PC-9 (cell line): ENCODE measurements at regions of chr2 and their contacts with region 1.

Region 1: GRCh38 chr2:39436592-39437510 is at the start of gene MAP4K3:
- DNase-seq: peak; percentile 87 to 93
- H3K4me3 ChIP-seq: peak within 1 kb of the TSS; percentile 86
- H3K27ac ChIP-seq: peak within 1 kb of the TSS; percentile 69
- H3K4me1 ChIP-seq: peaks cover 53% of the 10 kb centered on the region
- H3K27me3 ChIP-seq: no peaks in the 10 kb centered on the region
- CTCF ChIP-seq: no peak
- total RNA-seq, gene MAP4K3: 38.4 and 46.7 TPM in 2 replicates

Region 2: GRCh38 chr2:39338502-39338901 is 98.3 kb before region 1 on chr2:
- CTCF ChIA-PET with region 1: no interaction called
- POLR2A ChIA-PET with region 1: no interaction called
- intact Hi-C with region 1: no loop called
- DNase-seq: no peak
- H3K4me3 ChIP-seq: no peak overlapping the region
- H3K27ac ChIP-seq: no peak overlapping the region
- H3K4me1 ChIP-seq: no peaks in the 10 kb centered on the region
- H3K27me3 ChIP-seq: no peaks in the 10 kb centered on the region
- CTCF ChIP-seq: no peak

Region 3: DNA sequence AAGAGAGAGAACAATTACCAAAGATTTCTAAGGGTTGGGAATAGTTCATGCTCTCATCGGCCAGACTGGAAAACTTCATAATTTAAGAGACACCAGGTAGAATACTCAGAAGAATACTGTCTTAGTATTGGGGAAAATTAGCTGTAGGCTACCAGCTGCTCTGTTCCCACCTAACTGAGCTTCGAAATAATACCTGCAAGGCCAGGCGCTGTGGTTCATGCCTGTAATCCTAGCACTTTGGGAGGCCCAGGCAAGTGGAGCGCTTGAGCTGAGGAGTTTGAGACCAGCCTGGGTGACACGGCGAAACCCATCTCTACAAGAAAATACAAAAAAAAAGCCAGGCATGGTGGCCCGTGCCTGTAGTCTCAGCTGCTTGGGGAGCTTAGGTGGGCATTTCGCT is 35.5 kb before region 1 on chr2:
- CTCF ChIA-PET with region 1: interaction called, 3 read pairs
- POLR2A ChIA-PET with region 1: interaction called, 17 read pairs
- intact Hi-C with region 1: no loop called
- DNase-seq: no peak
- H3K4me3 ChIP-seq: no peak overlapping the region
- H3K27ac ChIP-seq: no peak overlapping the region
- H3K4me1 ChIP-seq: peaks cover 8% of the 10 kb centered on the region; the same call in 1 of the 2 replicates
- H3K27me3 ChIP-seq: no peaks in the 10 kb centered on the region
- CTCF ChIP-seq: no peak

Region 4: GRCh38 chr2:39492095-39492590 is 55.3 kb after region 1 on chr2:
- CTCF ChIA-PET with region 1: no interaction called
- POLR2A ChIA-PET with region 1: no interaction called
- intact Hi-C with region 1: loop called (anchors 5 kb)
- DNase-seq: peak in 1 of 2 experiments; percentile 92
- H3K4me3 ChIP-seq: peak overlapping the region; percentile 15; the same call in 1 of the 2 replicates
- H3K27ac ChIP-seq: peak overlapping the region; percentile 55
- H3K4me1 ChIP-seq: peaks cover 46% of the 10 kb centered on the region
- H3K27me3 ChIP-seq: no peaks in the 10 kb centered on the region
- CTCF ChIP-seq: no peak

Region 5: GRCh38 chr2:39547811-39548719 is 111.2 kb after region 1 on chr2:
- CTCF ChIA-PET with region 1: no interaction called
- POLR2A ChIA-PET with region 1: interaction called, 7 read pairs
- intact Hi-C with region 1: loop called (anchors 2 kb)
- DNase-seq: peak; percentile 74 to 96
- H3K4me3 ChIP-seq: no peak overlapping the region
- H3K27ac ChIP-seq: peak overlapping the region; percentile 64
- H3K4me1 ChIP-seq: peaks cover 50% of the 10 kb centered on the region
- H3K27me3 ChIP-seq: no peaks in the 10 kb centered on the region
- CTCF ChIP-seq: no peak

Region 6: GRCh38 chr2:39855871-39856270 is 419.0 kb after region 1 on chr2:
- CTCF ChIA-PET with region 1: no interaction called
- POLR2A ChIA-PET with region 1: interaction called, 10 read pairs
- intact Hi-C with region 1: no loop called
- DNase-seq: peak in 1 of 2 experiments; percentile 70
- H3K4me3 ChIP-seq: no peak overlapping the region; the same call in 1 of the 2 replicates
- H3K27ac ChIP-seq: peak overlapping the region; percentile 55
- H3K4me1 ChIP-seq: peaks cover 29% of the 10 kb centered on the region
- H3K27me3 ChIP-seq: no peaks in the 10 kb centered on the region
- CTCF ChIP-seq: no peak